ENCODE measurements at regions of chr1 and their contacts with region 1.

Region 1: GRCh38 chr1:17059739-17060460 is 6.1 kb upstream of the SDHB start:
- DNase-seq: peak; percentile 74 to 76
- H3K4me3 ChIP-seq: no peak overlapping the region
- H3K4me3 Mint-ChIP-seq: no peak overlapping the region
- H3K27ac Mint-ChIP-seq: no peak overlapping the region
- H3K4me1 ChIP-seq: no peaks in the 10 kb centered on the region
- H3K4me1 Mint-ChIP-seq: no peaks in the 10 kb centered on the region
- H3K27me3 ChIP-seq: no peaks in the 10 kb centered on the region
- H3K27me3 Mint-ChIP-seq: no peaks in the 10 kb centered on the region
- CTCF ChIP-seq: peak; percentile 71 to 74

Region 2: DNA sequence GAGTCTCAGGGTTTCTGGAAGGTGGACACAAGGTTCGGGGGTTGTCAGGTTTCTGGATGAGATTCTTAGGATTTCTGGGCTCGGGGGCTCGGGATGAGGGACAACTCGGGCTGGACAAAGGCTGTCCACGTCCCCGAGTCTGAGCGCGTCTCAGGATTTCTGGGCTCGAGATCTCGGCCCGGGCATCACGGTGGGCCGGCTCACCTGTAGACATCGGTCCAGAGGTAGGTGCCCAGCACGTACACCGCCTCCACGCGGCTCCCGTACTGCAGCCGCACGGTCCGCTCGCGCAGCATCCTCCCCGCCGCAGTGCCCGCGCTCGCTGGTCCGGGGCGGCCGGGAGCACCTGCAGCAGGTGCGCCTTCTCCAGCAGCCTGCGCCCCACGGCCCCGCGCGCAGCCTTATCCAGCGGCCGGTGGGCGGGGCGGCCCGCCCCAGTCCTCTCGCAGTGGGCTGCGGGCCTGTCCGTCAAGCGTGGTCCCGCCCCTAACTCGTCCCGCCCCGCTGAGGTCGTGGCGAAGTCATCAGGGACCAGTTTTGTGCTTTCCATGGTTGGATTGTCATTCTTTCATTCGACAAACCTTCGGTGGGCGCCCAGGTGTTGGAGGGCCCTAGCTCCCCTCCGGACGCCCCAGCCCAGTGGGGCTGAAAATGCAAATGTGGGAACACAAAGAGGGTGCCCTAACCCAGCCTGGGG is 59.3 kb after region 1 on chr1 and contains the start of gene PADI2:
- CTCF ChIA-PET with region 1: no interaction called
- POLR2A ChIA-PET with region 1: no interaction called
- intact Hi-C with region 1: loop called (anchors 1 kb)
- DNase-seq: peak; percentile 70 to 82
- H3K4me3 ChIP-seq: peak within 1 kb of the TSS; percentile 29
- H3K4me3 Mint-ChIP-seq: peak within 1 kb of the TSS; percentile 55
- H3K27ac Mint-ChIP-seq: no peak within 1 kb of the TSS
- H3K4me1 ChIP-seq: peaks cover 11% of the 10 kb centered on the region
- H3K4me1 Mint-ChIP-seq: peaks cover 6% of the 10 kb centered on the region
- H3K27me3 ChIP-seq: no peaks in the 10 kb centered on the region
- H3K27me3 Mint-ChIP-seq: peaks cover 4% of the 10 kb centered on the region
- CTCF ChIP-seq: no peak
- total RNA-seq, gene PADI2: 0.73 and 0.84 TPM in 2 replicates

Region 3: GRCh38 chr1:17236779-17237560 is 177.1 kb after region 1 on chr1:
- CTCF ChIA-PET with region 1: no interaction called
- POLR2A ChIA-PET with region 1: no interaction called
- intact Hi-C with region 1: loop called (anchors 1 kb)
- DNase-seq: peak; percentile 83 to 90
- H3K4me3 ChIP-seq: no peak overlapping the region
- H3K4me3 Mint-ChIP-seq: no peak overlapping the region
- H3K27ac Mint-ChIP-seq: no peak overlapping the region
- H3K4me1 ChIP-seq: peaks cover 22% of the 10 kb centered on the region
- H3K4me1 Mint-ChIP-seq: no peaks in the 10 kb centered on the region
- H3K27me3 ChIP-seq: no peaks in the 10 kb centered on the region
- H3K27me3 Mint-ChIP-seq: no peaks in the 10 kb centered on the region
- CTCF ChIP-seq: peak; percentile 77 to 79

Region 4: DNA sequence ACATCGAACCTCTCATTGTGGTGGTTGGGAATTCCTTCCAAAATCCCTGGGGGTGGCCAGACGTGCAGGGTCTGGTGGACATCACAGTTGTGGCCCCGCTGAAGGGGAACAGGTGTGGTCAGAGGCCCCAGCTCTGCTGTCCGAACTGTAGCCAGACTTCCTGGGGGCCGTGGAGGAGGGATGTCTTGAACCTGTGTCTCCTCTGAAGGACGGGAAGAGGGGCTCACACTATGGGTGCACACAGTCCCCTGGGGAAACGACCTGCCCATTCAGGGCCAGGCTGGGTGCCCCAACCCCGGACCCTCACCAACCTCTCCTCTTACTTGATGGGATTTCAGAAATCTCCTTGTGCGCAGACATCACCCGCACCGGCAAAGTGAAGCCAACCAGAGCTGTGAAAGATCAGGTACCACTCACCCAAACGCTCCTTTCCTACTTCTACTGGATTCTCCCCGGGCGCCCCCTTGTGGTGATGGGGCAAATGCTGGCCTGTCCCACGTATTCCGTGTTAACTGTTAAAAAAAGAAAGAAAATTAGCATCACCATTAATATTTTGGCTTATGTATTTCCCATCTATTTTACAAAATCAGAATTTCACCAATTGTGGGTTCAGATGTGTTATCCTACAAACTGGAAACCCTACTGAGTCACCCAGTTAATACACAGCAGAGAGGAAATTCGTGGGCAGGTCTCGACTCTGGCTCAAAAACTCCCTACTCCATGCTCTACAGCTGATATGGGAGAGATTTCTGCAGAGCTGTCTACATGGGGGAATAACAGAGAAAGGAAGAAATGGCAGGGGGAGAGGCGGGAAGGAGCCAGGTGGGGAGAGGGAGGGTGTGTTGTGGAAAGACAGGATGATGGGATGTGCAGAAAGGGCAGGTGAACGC is 276.2 kb after region 1 on chr1:
- CTCF ChIA-PET with region 1: no interaction called
- POLR2A ChIA-PET with region 1: no interaction called
- intact Hi-C with region 1: loop called (anchors 5 kb)
- DNase-seq: peak; percentile 56 to 80
- H3K4me3 ChIP-seq: no peak overlapping the region
- H3K4me3 Mint-ChIP-seq: no peak overlapping the region
- H3K27ac Mint-ChIP-seq: no peak overlapping the region
- H3K4me1 ChIP-seq: no peaks in the 10 kb centered on the region
- H3K4me1 Mint-ChIP-seq: peaks cover 7% of the 10 kb centered on the region
- H3K27me3 ChIP-seq: no peaks in the 10 kb centered on the region
- H3K27me3 Mint-ChIP-seq: peaks cover 18% of the 10 kb centered on the region
- CTCF ChIP-seq: peak; percentile 70 to 89